ENCODE measurements at regions of chr19 and their contacts with region 1.

Region 1: DNA sequence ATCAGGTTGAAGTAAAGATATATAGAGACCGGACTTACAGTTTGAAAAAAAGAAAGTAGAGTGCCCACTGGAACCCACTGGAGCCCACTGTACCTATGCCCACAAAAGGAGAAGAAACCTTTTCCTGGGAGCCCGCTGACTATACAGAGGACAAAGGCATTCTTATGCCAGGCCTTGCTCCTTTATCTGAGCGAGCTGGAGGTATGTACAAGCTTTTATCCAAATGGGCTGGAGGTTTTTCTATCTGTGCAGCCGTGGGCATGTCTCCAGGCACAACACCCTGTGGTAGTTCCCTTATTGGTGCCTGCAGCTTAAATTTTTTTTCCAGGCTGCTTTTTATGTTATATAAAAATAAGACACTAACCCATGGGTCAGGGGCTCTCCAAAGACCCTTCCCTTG is 8.4 kb downstream of the ZNF234 start:
- DNase-seq: no peak
- ATAC-seq: no peak
- H3K4me3 ChIP-seq: no peak overlapping the region
- H3K27ac ChIP-seq: no peak overlapping the region
- H3K4me1 ChIP-seq: no peaks in the 10 kb centered on the region
- H3K27me3 ChIP-seq: no peaks in the 10 kb centered on the region
- CTCF ChIP-seq: no peak
- EP300 ChIP-seq: no peak
- POLR2A ChIP-seq: no peak
- RAD21 ChIP-seq: no peak

Region 2: DNA sequence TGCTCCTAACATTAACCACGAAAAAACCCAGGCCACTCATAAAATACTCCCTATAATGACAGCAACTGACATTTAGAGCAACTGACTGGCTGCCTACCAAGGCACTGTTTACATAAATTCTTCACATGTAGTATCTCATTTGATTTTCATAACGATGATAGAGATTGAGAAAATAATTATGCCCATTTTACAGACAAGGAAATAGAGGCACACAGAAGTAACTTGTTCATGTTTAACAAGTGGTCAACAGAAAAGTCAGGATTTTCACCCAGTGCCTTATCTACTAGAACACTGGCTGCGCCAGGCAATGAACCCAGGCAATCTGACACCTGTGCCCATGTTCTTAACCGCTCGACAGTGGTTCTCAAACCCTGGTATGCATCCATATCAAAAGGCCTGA is 221.0 kb before region 1 on chr19:
- CTCF ChIA-PET with region 1: no interaction called
- POLR2A ChIA-PET with region 1: no interaction called
- in situ Hi-C with region 1: no loop called
- intact Hi-C with region 1: no loop called
- DNase-seq: no peak
- ATAC-seq: no peak
- H3K4me3 ChIP-seq: no peak overlapping the region
- H3K27ac ChIP-seq: no peak overlapping the region
- H3K4me1 ChIP-seq: no peaks in the 10 kb centered on the region; a peak in 1 of 5 replicates
- H3K27me3 ChIP-seq: no peaks in the 10 kb centered on the region
- CTCF ChIP-seq: no peak
- EP300 ChIP-seq: no peak
- POLR2A ChIP-seq: no peak
- RAD21 ChIP-seq: no peak

Region 3: GRCh38 chr19:44164673-44165512 is 15.1 kb after region 1 on chr19 and contains the start of gene ZNF226:
- CTCF ChIA-PET with region 1: no interaction called
- POLR2A ChIA-PET with region 1: interaction called, 11 read pairs
- in situ Hi-C with region 1: no loop called
- intact Hi-C with region 1: no loop called
- DNase-seq: peak; percentile 87 to 95 (median 89)
- ATAC-seq: peak; percentile 99
- H3K4me3 ChIP-seq: peak within 1 kb of the TSS; percentile 64
- H3K27ac ChIP-seq: peak within 1 kb of the TSS; percentile 80
- H3K4me1 ChIP-seq: no peaks in the 10 kb centered on the region; a peak in 1 of 5 replicates
- H3K27me3 ChIP-seq: no peaks in the 10 kb centered on the region
- CTCF ChIP-seq: no peak
- EP300 ChIP-seq: no peak
- POLR2A ChIP-seq: peak; percentile 82
- RAD21 ChIP-seq: no peak
- polyA plus RNA-seq, gene ZNF226: 18.0 to 19.4 TPM

Measured in K562 (cell line).